PC-3 (cell line): ENCODE measurements at regions of chr10 and their contacts with region 1.

Region 1: GRCh38 chr10:90751107-90751997 is 106.5 kb downstream of the HTR7 start:
- DNase-seq: peak; percentile 70
- ATAC-seq: peak; percentile 78
- H3K4me3 ChIP-seq: no peak overlapping the region
- H3K27ac ChIP-seq: no peak overlapping the region
- H3K4me1 ChIP-seq: no peaks in the 10 kb centered on the region
- H3K27me3 ChIP-seq: no peaks in the 10 kb centered on the region
- CTCF ChIP-seq: peak; percentile 82

Region 2: DNA sequence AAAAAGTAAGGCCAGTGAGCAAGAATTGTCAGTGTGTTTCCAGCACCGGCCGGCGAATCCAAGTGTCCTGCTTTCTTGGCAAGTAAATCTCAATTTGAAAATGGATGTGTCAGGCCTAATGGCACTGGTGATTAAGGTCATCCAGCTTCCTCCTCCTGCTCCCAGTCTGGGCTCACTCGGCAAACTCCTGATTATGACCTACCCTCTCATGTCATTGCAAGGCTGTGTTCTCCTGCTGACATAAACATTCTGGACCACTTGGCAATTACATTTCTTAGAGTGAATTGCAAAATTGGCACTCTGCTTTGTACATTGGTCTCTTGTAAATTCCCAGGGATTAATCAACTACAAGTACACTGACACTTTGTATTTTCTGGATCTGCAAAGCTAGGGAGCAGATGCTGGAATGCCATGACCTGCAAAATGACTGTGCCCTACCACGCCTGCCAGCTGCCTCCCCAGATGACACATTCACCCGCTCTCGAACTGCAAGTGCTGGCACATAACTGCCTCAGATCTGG is 576.1 kb before region 1 on chr10:
- CTCF ChIA-PET with region 1: interaction called, 10 read pairs
- POLR2A ChIA-PET with region 1: no interaction called
- intact Hi-C with region 1: no loop called
- DNase-seq: no peak
- ATAC-seq: no peak
- H3K4me3 ChIP-seq: no peak overlapping the region
- H3K27ac ChIP-seq: no peak overlapping the region
- H3K4me1 ChIP-seq: peaks cover 11% of the 10 kb centered on the region; the same call in 1 of the 2 replicates
- H3K27me3 ChIP-seq: no peaks in the 10 kb centered on the region
- CTCF ChIP-seq: no peak

Region 3: DNA sequence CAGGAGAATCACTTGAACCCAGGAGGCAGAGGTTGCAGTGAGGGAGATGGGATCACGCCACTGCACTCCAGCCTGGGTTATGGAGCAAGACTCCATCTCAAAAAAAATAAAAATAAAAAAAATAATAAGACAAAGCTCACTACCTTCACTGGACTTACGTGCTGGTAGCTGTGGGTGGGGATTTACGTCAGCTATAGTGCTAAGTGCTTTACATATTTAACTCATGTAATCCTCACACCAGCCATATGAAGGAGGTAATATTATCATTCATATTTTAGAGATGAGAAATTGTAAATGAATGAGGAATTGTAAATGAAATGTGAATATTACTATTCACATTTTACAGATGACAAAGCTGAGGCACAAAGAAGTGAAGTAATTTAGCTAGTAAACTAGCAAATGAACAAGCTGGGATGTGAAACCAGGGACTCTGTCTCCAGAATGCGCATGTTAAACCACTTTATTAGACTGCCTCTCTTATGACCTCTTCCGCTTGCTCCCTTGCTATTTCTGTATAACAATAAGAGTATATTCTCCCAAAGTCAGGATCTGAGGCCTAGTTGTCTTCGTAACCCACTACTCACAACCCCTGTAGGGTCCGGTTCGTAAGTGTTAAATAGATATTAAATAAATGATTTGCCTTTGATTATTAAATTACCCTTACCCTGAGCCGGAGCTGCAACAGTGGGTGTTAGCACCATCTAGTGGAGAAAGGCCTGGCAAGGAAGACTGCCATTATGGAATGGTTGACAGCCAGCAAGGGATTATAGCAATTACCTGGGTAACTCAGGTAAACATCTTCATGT is 36.2 kb after region 1 on chr10:
- CTCF ChIA-PET with region 1: interaction called, 4 read pairs
- POLR2A ChIA-PET with region 1: no interaction called
- intact Hi-C with region 1: loop called (anchors 2 kb)
- DNase-seq: peak; percentile 55
- ATAC-seq: peak; percentile 64; the same call in 1 of the 2 replicates
- H3K4me3 ChIP-seq: no peak overlapping the region
- H3K27ac ChIP-seq: no peak overlapping the region
- H3K4me1 ChIP-seq: no peaks in the 10 kb centered on the region
- H3K27me3 ChIP-seq: peaks cover 22% of the 10 kb centered on the region
- CTCF ChIP-seq: peak; percentile 85